ENCODE measurements at regions of chr12 and their contacts with region 1.

Region 1: DNA sequence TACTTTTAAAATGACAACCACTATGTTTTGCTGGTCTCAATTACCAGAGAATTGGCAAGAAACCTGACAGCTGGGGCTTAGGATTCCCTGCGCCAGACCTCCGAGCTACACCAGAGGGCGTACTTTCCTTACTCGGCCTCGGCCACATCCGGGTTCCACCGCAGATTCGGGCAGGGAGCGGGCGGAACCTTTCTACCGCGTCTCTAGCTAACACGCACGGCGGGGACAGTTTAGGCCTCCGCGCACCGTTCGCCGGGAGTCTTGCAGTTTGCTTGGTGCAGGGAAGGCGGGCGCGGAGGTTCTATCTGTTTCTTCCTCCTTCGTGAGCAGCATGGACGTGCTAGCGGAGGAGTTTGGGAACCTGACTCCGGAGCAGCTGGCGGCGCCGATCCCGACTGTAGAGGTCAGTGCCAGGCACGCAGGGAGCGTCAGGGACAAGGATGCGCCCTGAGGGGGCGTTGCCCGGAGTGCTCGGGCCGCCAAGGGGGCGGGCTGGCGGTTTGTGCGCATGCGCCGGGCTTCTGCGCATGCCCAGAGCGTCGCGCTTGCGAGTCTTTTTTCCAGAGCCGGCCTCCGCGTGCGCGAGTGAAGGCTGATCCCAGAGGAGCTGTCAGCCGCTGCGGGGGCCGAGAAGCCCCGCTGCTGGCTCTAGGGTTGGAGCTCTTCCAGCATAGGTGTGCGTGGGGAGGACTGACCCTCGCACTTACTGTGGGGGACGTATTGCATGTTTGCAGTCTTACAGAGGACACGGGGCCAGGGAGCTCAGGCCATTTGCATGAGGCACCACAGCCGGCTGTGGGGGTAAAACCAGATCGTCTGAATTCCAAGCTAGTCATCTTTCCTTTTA is at the start of gene POLR3B:
- DNase-seq: peak; percentile 95 to 99 (median 98)
- ATAC-seq: peak; percentile 98
- H3K4me3 ChIP-seq: peak within 1 kb of the TSS; percentile 96
- H3K4me3 Mint-ChIP-seq: peak within 1 kb of the TSS; percentile 81 to 97 (median 92)
- H3K27ac ChIP-seq: peak within 1 kb of the TSS; percentile 74
- H3K27ac Mint-ChIP-seq: peak within 1 kb of the TSS; percentile 85 to 95 (median 91)
- H3K4me1 ChIP-seq: peaks cover 6 to 12% of the 10 kb centered on the region in 2 donors
- H3K4me1 Mint-ChIP-seq: peaks cover 11 to 22% (median 17%) of the 10 kb centered on the region in 7 donors
- H3K27me3 ChIP-seq: no peaks in the 10 kb centered on the region
- H3K27me3 Mint-ChIP-seq: no peaks in the 10 kb centered on the region
- total RNA-seq, gene POLR3B: 4.7 to 8.7 (median 6.8) TPM

Region 2: DNA sequence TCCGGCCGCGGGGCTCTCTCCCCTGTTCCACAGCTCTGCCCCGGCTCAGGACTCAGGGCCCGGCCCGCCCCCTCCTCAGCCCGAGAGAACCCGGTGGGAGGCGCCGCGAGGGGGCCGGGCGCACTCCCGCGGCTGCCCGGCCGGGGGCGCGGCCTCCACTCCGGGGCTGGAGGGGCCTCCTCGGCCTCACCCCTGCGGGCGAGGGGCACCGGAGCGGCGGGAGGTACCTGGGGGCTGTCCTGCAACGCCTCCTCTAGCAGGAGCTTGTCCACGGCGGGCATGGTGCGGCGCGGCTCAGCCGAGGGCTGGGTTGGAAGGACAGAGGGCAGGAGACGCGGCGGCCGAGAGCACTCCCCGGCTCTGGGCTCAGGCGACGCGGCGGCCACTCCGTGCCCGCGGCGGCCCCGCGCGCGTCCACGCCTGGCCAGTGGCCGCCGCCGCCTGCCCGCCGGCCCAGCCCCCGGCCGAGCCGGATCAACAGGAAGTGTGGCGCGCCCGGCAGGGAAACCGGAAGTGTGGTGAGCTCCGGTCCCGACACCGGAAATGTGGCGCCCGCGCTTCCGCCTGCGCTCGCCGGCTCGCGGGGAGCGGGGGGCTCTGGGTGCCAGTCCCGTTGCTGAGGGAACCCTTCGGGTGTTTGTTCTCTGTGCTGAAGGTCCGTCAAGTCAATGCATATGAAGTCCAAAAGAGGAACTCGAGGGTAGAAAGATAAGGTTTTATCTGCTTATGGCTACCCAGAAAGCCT is 1121.9 kb before region 1 on chr12 and contains the start of gene APPL2:
- CTCF ChIA-PET with region 1: no interaction called
- POLR2A ChIA-PET with region 1: no interaction called
- intact Hi-C with region 1: loop called in 1 of 2 experiments (anchors 2 kb)
- DNase-seq: peak; percentile 52 to 81 (median 71)
- ATAC-seq: peak; percentile 86
- H3K4me3 ChIP-seq: peak within 1 kb of the TSS; percentile 71
- H3K4me3 Mint-ChIP-seq: peak within 1 kb of the TSS in 9 of 10 donors; percentile 89 to 95 (median 93)
- H3K27ac ChIP-seq: peak within 1 kb of the TSS; percentile 78
- H3K27ac Mint-ChIP-seq: peak within 1 kb of the TSS; percentile 86 to 96 (median 91)
- H3K4me1 ChIP-seq: peaks cover 25 to 39% of the 10 kb centered on the region in 2 donors
- H3K4me1 Mint-ChIP-seq: peaks cover 42 to 54% (median 48%) of the 10 kb centered on the region in 7 donors
- H3K27me3 ChIP-seq: no peaks in the 10 kb centered on the region
- H3K27me3 Mint-ChIP-seq: peaks cover 0 to 3% (median 0%) of the 10 kb centered on the region in 5 donors
- total RNA-seq, gene APPL2: 31.6 to 74.5 (median 58.3) TPM

Region 3: DNA sequence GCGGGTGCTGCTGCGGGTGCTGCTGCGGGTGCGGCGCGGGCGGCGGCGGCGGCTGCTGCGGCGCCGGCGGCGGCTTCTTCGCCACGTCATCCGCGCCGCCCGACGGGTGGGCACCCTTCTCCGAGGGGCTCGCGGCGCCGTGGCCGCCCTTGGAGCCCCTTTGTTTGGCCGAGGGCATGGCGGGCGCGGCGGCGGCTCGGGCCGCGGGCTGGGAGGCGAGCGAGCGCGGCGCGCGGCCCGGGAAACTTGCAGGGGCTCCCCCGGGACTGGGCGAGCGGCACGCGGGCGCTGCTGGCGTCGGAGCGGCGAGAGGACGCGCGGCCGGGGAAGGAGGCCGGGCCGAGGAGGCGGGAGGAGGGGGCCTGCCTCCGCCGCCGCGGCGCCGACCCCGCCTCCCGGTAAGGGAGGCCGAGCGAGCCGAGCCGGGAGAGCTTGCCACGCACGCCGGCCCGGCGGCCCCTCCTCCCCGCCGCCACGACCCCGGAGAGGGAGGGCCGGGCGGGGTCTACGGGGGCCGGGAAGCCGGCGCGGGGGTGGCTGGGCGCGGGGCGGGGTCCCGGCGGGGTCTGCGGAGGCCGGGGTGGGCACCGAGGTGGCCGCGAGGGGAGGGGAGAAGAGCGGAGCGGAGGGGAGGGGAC is 110.0 kb before region 1 on chr12 and contains the start of gene CKAP4:
- CTCF ChIA-PET with region 1: no interaction called
- POLR2A ChIA-PET with region 1: interaction called, 5 read pairs
- intact Hi-C with region 1: loop called (anchors 1 to 5 kb)
- DNase-seq: peak; percentile 45 to 65 (median 55)
- ATAC-seq: peak; percentile 59
- H3K4me3 ChIP-seq: peak within 1 kb of the TSS; percentile 69
- H3K4me3 Mint-ChIP-seq: peak within 1 kb of the TSS; percentile 81 to 92 (median 86)
- H3K27ac ChIP-seq: peak within 1 kb of the TSS; percentile 80
- H3K27ac Mint-ChIP-seq: peak within 1 kb of the TSS; percentile 58 to 98 (median 94)
- H3K4me1 ChIP-seq: peaks cover 17 to 22% of the 10 kb centered on the region in 2 donors
- H3K4me1 Mint-ChIP-seq: peaks cover 13 to 37% (median 31%) of the 10 kb centered on the region in 7 donors
- H3K27me3 ChIP-seq: no peaks in the 10 kb centered on the region
- H3K27me3 Mint-ChIP-seq: peaks cover 0 to 19% (median 0%) of the 10 kb centered on the region in 5 donors
- total RNA-seq, gene CKAP4: 4.3 to 27.2 (median 13.0) TPM

Region 4: GRCh38 chr12:106392759-106393158 is 35.0 kb after region 1 on chr12:
- CTCF ChIA-PET with region 1: no interaction called
- POLR2A ChIA-PET with region 1: no interaction called
- intact Hi-C with region 1: no loop called
- DNase-seq: no peak
- ATAC-seq: no peak
- H3K4me3 ChIP-seq: no peak overlapping the region
- H3K4me3 Mint-ChIP-seq: no peak overlapping the region
- H3K27ac ChIP-seq: no peak overlapping the region
- H3K27ac Mint-ChIP-seq: no peak overlapping the region
- H3K4me1 ChIP-seq: no peaks in the 10 kb centered on the region
- H3K4me1 Mint-ChIP-seq: peaks cover 0 to 5% (median 1%) of the 10 kb centered on the region in 7 donors
- H3K27me3 ChIP-seq: no peaks in the 10 kb centered on the region
- H3K27me3 Mint-ChIP-seq: no peaks in the 10 kb centered on the region

Region 5: GRCh38 chr12:106774005-106774807 is 416.4 kb after region 1 on chr12 and contains the start of gene RIC8B:
- CTCF ChIA-PET with region 1: no interaction called
- POLR2A ChIA-PET with region 1: interaction called, 3 read pairs
- intact Hi-C with region 1: loop called (anchors 1 kb)
- DNase-seq: peak; percentile 63 to 84 (median 70)
- ATAC-seq: peak; percentile 91
- H3K4me3 ChIP-seq: peak within 1 kb of the TSS; percentile 84
- H3K4me3 Mint-ChIP-seq: peak within 1 kb of the TSS; percentile 92 to 100 (median 97)
- H3K27ac ChIP-seq: peak within 1 kb of the TSS; percentile 88
- H3K27ac Mint-ChIP-seq: peak within 1 kb of the TSS; percentile 94 to 99 (median 97)
- H3K4me1 ChIP-seq: peaks cover 0 to 19% of the 10 kb centered on the region in 2 donors
- H3K4me1 Mint-ChIP-seq: peaks cover 22 to 49% (median 39%) of the 10 kb centered on the region in 7 donors
- H3K27me3 ChIP-seq: no peaks in the 10 kb centered on the region
- H3K27me3 Mint-ChIP-seq: peaks cover 0 to 7% (median 0%) of the 10 kb centered on the region in 5 donors
- total RNA-seq, gene RIC8B: 9.8 to 21.1 (median 15.6) TPM

Region 6: DNA sequence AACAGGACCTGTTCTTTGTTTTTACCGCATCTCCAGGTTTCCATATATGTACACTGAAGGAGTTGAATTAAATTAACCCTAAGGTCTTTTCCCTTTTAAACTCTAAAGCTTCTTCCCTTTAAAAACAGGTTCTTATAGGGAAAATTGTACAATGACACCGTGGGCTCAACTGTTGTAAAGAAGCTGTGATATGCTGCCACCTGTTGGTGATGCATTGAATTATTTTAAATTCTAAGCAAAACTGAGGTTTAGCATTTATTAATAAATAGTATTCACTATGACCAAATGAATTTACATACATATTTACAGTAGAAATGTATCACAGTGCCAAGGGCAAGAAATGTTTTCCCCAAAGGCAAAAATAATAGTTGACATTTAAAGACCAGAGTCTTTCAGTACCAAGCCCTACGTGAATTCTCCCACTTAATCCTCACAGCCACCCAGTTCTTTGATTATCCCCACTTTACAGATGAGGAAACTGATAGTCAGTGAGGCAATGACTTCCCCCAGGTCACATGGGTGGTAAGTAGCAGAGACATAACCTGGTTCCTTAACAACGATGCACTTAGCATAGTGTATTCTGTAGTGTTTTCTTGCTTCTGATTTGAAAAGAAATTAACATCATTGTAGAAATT is 562.3 kb after region 1 on chr12:
- CTCF ChIA-PET with region 1: interaction called, 5 read pairs
- POLR2A ChIA-PET with region 1: no interaction called
- intact Hi-C with region 1: loop called (anchors 1 kb)
- DNase-seq: peak in 7 of 9 donors; percentile 12 to 53 (median 32)
- ATAC-seq: peak; percentile 60
- H3K4me3 ChIP-seq: no peak overlapping the region
- H3K4me3 Mint-ChIP-seq: no peak overlapping the region
- H3K27ac ChIP-seq: no peak overlapping the region
- H3K27ac Mint-ChIP-seq: no peak overlapping the region
- H3K4me1 ChIP-seq: peaks cover 0 to under 1% of the 10 kb centered on the region in 2 donors
- H3K4me1 Mint-ChIP-seq: peaks cover 8 to 15% (median 9%) of the 10 kb centered on the region in 7 donors
- H3K27me3 ChIP-seq: no peaks in the 10 kb centered on the region
- H3K27me3 Mint-ChIP-seq: peaks cover 5 to 50% (median 14%) of the 10 kb centered on the region in 5 donors

Region 7: DNA sequence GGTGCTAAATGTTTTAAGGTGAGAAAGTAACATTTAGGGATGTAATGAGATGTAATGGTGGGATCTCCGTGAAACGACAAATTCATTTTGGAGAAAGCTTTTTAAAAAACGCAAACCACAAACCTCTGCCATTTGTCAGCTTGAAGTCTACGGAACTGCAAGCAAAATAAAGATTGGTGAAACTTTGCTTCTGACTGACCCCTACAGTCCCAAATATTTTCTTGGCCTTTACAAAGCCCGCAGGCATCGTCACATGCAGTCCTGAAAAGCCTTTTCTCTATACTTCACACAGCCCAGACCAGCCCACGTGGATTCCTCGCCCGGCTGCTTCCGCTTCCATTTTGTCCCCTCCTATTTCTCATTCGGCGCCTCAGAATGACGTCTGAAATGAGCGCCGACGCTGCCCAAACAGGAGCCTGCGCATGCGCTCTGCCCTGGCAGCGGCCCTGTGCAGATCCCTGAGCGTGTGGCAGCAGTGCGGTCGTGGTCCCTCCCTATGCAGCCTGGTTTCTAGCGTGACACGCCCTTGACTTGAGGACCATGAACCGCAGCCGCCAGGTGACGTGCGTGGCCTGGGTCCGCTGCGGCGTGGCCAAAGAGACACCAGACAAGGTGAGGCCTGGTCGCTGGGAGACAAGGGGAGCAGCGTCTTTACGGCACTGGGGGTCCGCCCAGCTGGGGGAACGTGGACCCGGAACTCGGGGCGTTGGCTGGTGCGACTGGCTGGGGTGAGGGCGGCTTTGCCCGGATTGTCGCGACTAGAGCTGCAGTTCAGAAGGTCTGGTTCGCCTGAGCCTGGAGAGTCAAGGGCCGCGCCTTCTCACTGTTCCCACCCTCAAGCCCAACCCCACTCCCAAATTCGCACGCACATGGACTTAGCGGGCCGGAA is 1327.8 kb after region 1 on chr12 and contains the start of gene PWP1:
- CTCF ChIA-PET with region 1: no interaction called
- POLR2A ChIA-PET with region 1: no interaction called
- intact Hi-C with region 1: loop called (anchors 1 kb)
- DNase-seq: peak; percentile 93 to 97 (median 95)
- ATAC-seq: peak; percentile 93
- H3K4me3 ChIP-seq: peak within 1 kb of the TSS; percentile 78
- H3K4me3 Mint-ChIP-seq: peak within 1 kb of the TSS; percentile 90 to 99 (median 95)
- H3K27ac ChIP-seq: peak within 1 kb of the TSS; percentile 88
- H3K27ac Mint-ChIP-seq: peak within 1 kb of the TSS; percentile 90 to 99 (median 97)
- H3K4me1 ChIP-seq: peaks cover 12 to 19% of the 10 kb centered on the region in 2 donors
- H3K4me1 Mint-ChIP-seq: peaks cover 23 to 40% (median 35%) of the 10 kb centered on the region in 7 donors
- H3K27me3 ChIP-seq: no peaks in the 10 kb centered on the region
- H3K27me3 Mint-ChIP-seq: peaks cover 0 to 3% (median 0%) of the 10 kb centered on the region in 5 donors
- total RNA-seq, gene PWP1: 20.9 to 42.5 (median 25.7) TPM